Right cardiac atrium (tissue), 5 donors: ENCODE measurements at regions of chr1 and their contacts with region 1.

Region 1: DNA sequence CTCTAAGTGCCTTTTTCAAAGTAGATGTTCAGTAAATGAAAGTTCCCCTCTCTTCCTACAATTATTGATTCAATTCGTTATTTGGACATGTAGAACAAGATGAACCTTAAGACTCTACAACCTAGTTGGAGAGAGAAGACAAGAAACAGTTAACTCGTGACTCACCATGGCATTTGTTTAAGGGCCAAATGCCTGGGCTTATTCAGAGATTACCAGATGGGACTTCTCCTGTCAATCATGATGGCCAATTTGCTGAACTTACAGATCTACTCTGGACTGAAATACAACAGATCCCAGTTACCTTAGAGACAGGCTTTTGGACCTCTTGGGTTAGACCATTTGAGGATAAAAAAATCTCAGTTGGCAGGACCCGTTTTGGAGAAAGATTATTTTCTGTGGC is 93.5 kb downstream of the C1orf94 start:
- DNase-seq: no peak
- ATAC-seq: no peak
- H3K4me3 ChIP-seq: no peak overlapping the region
- H3K27ac ChIP-seq: no peak overlapping the region
- H3K4me1 ChIP-seq: no peaks in the 10 kb centered on the region
- H3K27me3 ChIP-seq: no peaks in the 10 kb centered on the region

Region 2: GRCh38 chr1:34419663-34420136 is 149.5 kb after region 1 on chr1:
- intact Hi-C with region 1: loop called in 1 of 4 experiments (anchors 10 kb)
- DNase-seq: no peak
- ATAC-seq: no peak
- H3K4me3 ChIP-seq: no peak overlapping the region
- H3K27ac ChIP-seq: no peak overlapping the region
- H3K4me1 ChIP-seq: no peaks in the 10 kb centered on the region
- H3K27me3 ChIP-seq: no peaks in the 10 kb centered on the region